Right cardiac atrium (tissue), 5 donors: ENCODE measurements at regions of chr20 and their contacts with region 1.

Region 1: GRCh38 chr20:48799706-48800105 is 28.1 kb downstream of the PREX1 start:
- DNase-seq: no peak
- ATAC-seq: no peak
- H3K4me3 ChIP-seq: no peak overlapping the region
- H3K27ac ChIP-seq: peak overlapping the region; percentile 71
- H3K4me1 ChIP-seq: peaks cover 6% of the 10 kb centered on the region
- H3K27me3 ChIP-seq: no peaks in the 10 kb centered on the region

Region 2: GRCh38 chr20:48259456-48260278 is 540.0 kb before region 1 on chr20:
- intact Hi-C with region 1: loop called in 1 of 4 experiments (anchors 5 kb)
- DNase-seq: no peak
- ATAC-seq: no peak
- H3K4me3 ChIP-seq: no peak overlapping the region
- H3K27ac ChIP-seq: no peak overlapping the region
- H3K4me1 ChIP-seq: no peaks in the 10 kb centered on the region
- H3K27me3 ChIP-seq: no peaks in the 10 kb centered on the region

Region 3: GRCh38 chr20:48738399-48739304 is 61.1 kb before region 1 on chr20:
- intact Hi-C with region 1: no loop called
- DNase-seq: no peak
- ATAC-seq: peak in 1 of 2 donors; percentile 17
- H3K4me3 ChIP-seq: no peak overlapping the region
- H3K27ac ChIP-seq: no peak overlapping the region
- H3K4me1 ChIP-seq: peaks cover 11% of the 10 kb centered on the region
- H3K27me3 ChIP-seq: no peaks in the 10 kb centered on the region

Region 4: GRCh38 chr20:49132995-49133478 is 333.3 kb after region 1 on chr20:
- intact Hi-C with region 1: no loop called
- DNase-seq: no peak
- ATAC-seq: peak; percentile 72 to 80
- H3K4me3 ChIP-seq: no peak overlapping the region
- H3K27ac ChIP-seq: no peak overlapping the region
- H3K4me1 ChIP-seq: peaks cover 2% of the 10 kb centered on the region
- H3K27me3 ChIP-seq: no peaks in the 10 kb centered on the region